Panc1 (cell line): ENCODE measurements at regions of chr2 and their contacts with region 1.

Region 1: GRCh38 chr2:66429071-66429477 is 5.9 kb upstream of the MEIS1 start:
- DNase-seq: peak; percentile 53
- ATAC-seq: no peak
- H3K4me3 ChIP-seq: no peak overlapping the region
- H3K27ac ChIP-seq: no peak overlapping the region
- H3K4me1 ChIP-seq: no peaks in the 10 kb centered on the region; the same call in none of the 2 replicates
- H3K27me3 ChIP-seq: peaks cover 24% of the 10 kb centered on the region
- CTCF ChIP-seq: peak; percentile 92

Region 2: GRCh38 chr2:65647249-65647842 is 781.7 kb before region 1 on chr2:
- CTCF ChIA-PET with region 1: no interaction called
- POLR2A ChIA-PET with region 1: no interaction called
- in situ Hi-C with region 1: no loop called
- intact Hi-C with region 1: loop called (anchors 10 kb)
- DNase-seq: no peak
- ATAC-seq: no peak
- H3K4me3 ChIP-seq: no peak overlapping the region
- H3K27ac ChIP-seq: no peak overlapping the region
- H3K4me1 ChIP-seq: no peaks in the 10 kb centered on the region
- H3K27me3 ChIP-seq: peaks cover 5% of the 10 kb centered on the region
- CTCF ChIP-seq: no peak

Region 3: GRCh38 chr2:66095814-66096345 is 333.2 kb before region 1 on chr2:
- CTCF ChIA-PET with region 1: no interaction called
- POLR2A ChIA-PET with region 1: no interaction called
- in situ Hi-C with region 1: no loop called
- intact Hi-C with region 1: no loop called
- DNase-seq: no peak
- ATAC-seq: no peak
- H3K4me3 ChIP-seq: no peak overlapping the region
- H3K27ac ChIP-seq: no peak overlapping the region
- H3K4me1 ChIP-seq: no peaks in the 10 kb centered on the region
- H3K27me3 ChIP-seq: no peaks in the 10 kb centered on the region
- CTCF ChIP-seq: no peak